ENCODE measurements at regions of chr6 and their contacts with region 1.

Region 1: DNA sequence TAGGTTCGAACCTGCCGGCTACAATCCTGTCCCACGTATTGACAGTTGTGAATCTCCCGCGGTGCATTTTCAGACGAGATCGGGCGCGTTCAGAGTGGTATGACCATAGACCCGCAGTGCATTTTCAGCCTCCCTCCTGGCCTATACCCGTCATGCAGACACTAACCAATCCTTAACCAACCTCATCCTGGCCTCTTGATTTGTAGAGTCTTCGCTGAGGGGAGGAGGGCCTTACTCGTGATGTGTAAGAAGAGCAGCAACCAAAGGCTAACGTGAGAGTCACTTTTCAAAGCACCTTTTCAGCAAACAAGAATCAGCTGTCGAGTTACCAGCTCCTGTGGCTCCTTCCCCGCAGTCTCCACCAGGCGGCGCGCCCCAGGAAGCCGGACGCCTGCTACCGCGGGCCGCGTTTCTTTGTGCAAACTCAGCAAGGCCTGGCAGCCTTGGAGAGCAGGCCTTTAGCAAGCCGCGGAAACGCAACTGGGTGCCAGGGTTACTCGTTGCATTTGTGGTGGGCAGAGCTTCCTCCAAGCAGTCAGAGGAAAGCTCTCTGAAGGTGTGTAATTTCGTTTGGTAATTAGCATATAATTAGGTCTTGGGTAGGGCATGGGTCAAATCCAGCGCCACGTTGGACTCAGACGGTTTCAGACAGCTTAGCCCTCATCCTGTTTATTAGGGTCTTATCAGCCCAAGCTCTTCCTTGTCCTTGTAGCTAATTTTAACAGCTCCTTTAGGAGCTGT is 139.8 kb downstream of the OR2B2 start:
- DNase-seq: peak; percentile 94
- ATAC-seq: peak; percentile 95
- H3K4me3 Mint-ChIP-seq: peak overlapping the region; percentile 14
- H3K27ac Mint-ChIP-seq: peak overlapping the region; percentile 56
- H3K4me1 Mint-ChIP-seq: peaks cover 9% of the 10 kb centered on the region
- H3K27me3 Mint-ChIP-seq: peaks cover 8% of the 10 kb centered on the region

Region 2: GRCh38 chr6:27782748-27783147 is 10.3 kb after region 1 on chr6:
- CTCF ChIA-PET with region 1: interaction called, 35 read pairs
- POLR2A ChIA-PET with region 1: no interaction called
- intact Hi-C with region 1: no loop called
- DNase-seq: no peak
- ATAC-seq: no peak
- H3K4me3 Mint-ChIP-seq: no peak overlapping the region
- H3K27ac Mint-ChIP-seq: no peak overlapping the region
- H3K4me1 Mint-ChIP-seq: no peaks in the 10 kb centered on the region
- H3K27me3 Mint-ChIP-seq: peaks cover 17% of the 10 kb centered on the region

Region 3: DNA sequence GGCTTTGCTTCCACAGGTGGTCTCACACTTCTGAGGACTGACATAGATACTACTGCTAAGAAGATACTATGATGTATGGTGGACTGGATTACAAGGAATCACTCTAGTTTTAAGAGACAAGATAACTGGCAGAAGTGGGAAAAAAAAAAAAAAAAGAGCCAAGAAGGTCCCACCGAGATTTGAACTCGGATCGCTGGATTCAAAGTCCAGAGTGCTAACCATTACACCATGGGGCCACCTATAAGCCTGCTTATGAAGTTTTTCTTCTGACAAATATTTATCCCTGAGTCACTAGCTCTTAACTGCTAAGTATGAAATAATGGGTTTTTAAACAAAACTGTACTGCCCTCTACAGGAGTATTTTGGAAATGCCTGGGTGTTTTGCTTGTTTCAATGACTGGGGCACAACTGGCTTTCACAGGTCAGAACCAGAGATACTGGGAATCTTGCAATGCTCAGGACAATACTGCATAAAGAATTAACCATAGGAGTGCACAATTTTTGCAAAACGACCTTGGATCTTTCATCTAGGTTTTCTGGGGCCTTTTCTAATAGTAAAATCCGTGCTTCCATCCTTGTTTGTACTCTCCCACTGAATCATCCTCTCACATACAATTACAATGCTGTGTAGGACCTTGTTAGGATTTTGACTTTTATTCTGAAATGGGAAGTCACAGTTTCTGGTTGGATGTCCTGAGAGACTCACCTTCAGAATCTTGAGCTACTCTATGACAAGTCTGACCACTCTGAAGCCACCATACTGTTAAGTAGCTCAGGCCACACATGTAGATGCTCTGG is 23.5 kb after region 1 on chr6:
- CTCF ChIA-PET with region 1: interaction called, 35 read pairs
- POLR2A ChIA-PET with region 1: interaction called, 4 read pairs
- intact Hi-C with region 1: loop called in 1 of 2 experiments (anchors 1 kb)
- DNase-seq: peak; percentile 59
- ATAC-seq: peak; percentile 55
- H3K4me3 Mint-ChIP-seq: no peak overlapping the region
- H3K27ac Mint-ChIP-seq: peak overlapping the region; percentile 13
- H3K4me1 Mint-ChIP-seq: peaks cover 26% of the 10 kb centered on the region
- H3K27me3 Mint-ChIP-seq: peaks cover 6% of the 10 kb centered on the region

Measured in activated CD4-positive, alpha-beta T cell treated with anti-CD3 and anti-CD28 coated beads for 36 hours (primary cell).